ENCODE measurements at regions of chr4 and their contacts with region 1.

Region 1: GRCh38 chr4:2934813-2935761 is 28.1 kb downstream of the NOP14 start:
- DNase-seq: peak; percentile 91 to 99 (median 97)
- ATAC-seq: peak; percentile 55
- H3K4me3 ChIP-seq: peak overlapping the region; percentile 71 to 95
- H3K4me3 Mint-ChIP-seq: peak overlapping the region; percentile 85
- H3K27ac ChIP-seq: peak overlapping the region; percentile 94 to 96
- H3K27ac Mint-ChIP-seq: peak overlapping the region; percentile 90
- H3K4me1 ChIP-seq: peaks cover 55% of the 10 kb centered on the region
- H3K4me1 Mint-ChIP-seq: peaks cover 46% of the 10 kb centered on the region
- H3K27me3 ChIP-seq: no peaks in the 10 kb centered on the region
- H3K27me3 Mint-ChIP-seq: no peaks in the 10 kb centered on the region
- CTCF ChIP-seq: no peak

Region 2: GRCh38 chr4:2755837-2756694 is 179.0 kb before region 1 on chr4 and contains the start of gene TNIP2:
- CTCF ChIA-PET with region 1: no interaction called
- POLR2A ChIA-PET with region 1: no interaction called
- intact Hi-C with region 1: loop called in 1 of 2 experiments (anchors 2 kb)
- DNase-seq: peak; percentile 55 to 88 (median 75)
- ATAC-seq: peak; percentile 83
- H3K4me3 ChIP-seq: peak within 1 kb of the TSS; percentile 57 to 65
- H3K4me3 Mint-ChIP-seq: peak within 1 kb of the TSS; percentile 76
- H3K27ac ChIP-seq: peak within 1 kb of the TSS; percentile 19 to 63
- H3K27ac Mint-ChIP-seq: peak within 1 kb of the TSS; percentile 67
- H3K4me1 ChIP-seq: peaks cover 17% of the 10 kb centered on the region
- H3K4me1 Mint-ChIP-seq: peaks cover 37% of the 10 kb centered on the region
- H3K27me3 ChIP-seq: no peaks in the 10 kb centered on the region
- H3K27me3 Mint-ChIP-seq: no peaks in the 10 kb centered on the region
- CTCF ChIP-seq: peak; percentile 22
- total RNA-seq, gene TNIP2: 50.9 to 56.5 TPM

Region 3: GRCh38 chr4:2837904-2838496 is 97.1 kb before region 1 on chr4:
- CTCF ChIA-PET with region 1: no interaction called
- POLR2A ChIA-PET with region 1: interaction called, 3 read pairs
- intact Hi-C with region 1: loop called (anchors 1 to 5 kb)
- DNase-seq: peak; percentile 43 to 91 (median 80)
- ATAC-seq: peak; percentile 96
- H3K4me3 ChIP-seq: peak overlapping the region; percentile 41 to 42
- H3K4me3 Mint-ChIP-seq: peak overlapping the region; percentile 81
- H3K27ac ChIP-seq: peak overlapping the region; percentile 40 to 74
- H3K27ac Mint-ChIP-seq: peak overlapping the region; percentile 94
- H3K4me1 ChIP-seq: peaks cover 60% of the 10 kb centered on the region
- H3K4me1 Mint-ChIP-seq: peaks cover 68% of the 10 kb centered on the region
- H3K27me3 ChIP-seq: no peaks in the 10 kb centered on the region
- H3K27me3 Mint-ChIP-seq: no peaks in the 10 kb centered on the region
- CTCF ChIP-seq: no peak

Region 4: DNA sequence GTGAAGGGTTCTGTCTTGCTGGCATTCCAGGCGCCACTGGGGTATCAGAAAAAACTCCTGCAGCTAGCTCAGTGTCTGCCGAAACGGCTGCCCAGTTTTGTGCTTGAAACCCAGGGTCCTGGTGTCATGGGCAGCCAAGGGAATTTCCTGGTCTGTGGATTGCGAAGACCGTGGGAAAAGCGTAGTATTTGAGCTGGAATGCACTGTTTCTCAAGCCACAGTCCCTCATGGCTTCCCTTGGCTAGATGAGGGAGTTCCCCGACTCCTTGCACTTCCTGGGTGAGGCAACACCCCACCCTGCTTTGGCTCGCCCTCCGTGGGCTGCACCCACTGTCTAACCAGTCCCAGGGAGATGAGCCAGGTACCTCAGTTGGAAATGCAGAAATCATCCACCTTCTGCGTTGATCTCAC is 11.9 kb before region 1 on chr4:
- CTCF ChIA-PET with region 1: no interaction called
- POLR2A ChIA-PET with region 1: interaction called, 11 read pairs
- intact Hi-C with region 1: loop called in 1 of 2 experiments (anchors 1 kb)
- DNase-seq: peak in 1 of 9 experiments; percentile 59
- ATAC-seq: peak; percentile 26
- H3K4me3 ChIP-seq: no peak overlapping the region
- H3K4me3 Mint-ChIP-seq: peak overlapping the region; percentile 35
- H3K27ac ChIP-seq: peak overlapping the region in 1 of 2 experiments; percentile 70
- H3K27ac Mint-ChIP-seq: peak overlapping the region; percentile 89
- H3K4me1 ChIP-seq: peaks cover 22% of the 10 kb centered on the region
- H3K4me1 Mint-ChIP-seq: peaks cover 44% of the 10 kb centered on the region
- H3K27me3 ChIP-seq: no peaks in the 10 kb centered on the region
- H3K27me3 Mint-ChIP-seq: no peaks in the 10 kb centered on the region
- CTCF ChIP-seq: no peak

Measured in CD8-positive, alpha-beta T cell (primary cell).